ENCODE measurements at regions of chr16 and their contacts with region 1.

Region 1: DNA sequence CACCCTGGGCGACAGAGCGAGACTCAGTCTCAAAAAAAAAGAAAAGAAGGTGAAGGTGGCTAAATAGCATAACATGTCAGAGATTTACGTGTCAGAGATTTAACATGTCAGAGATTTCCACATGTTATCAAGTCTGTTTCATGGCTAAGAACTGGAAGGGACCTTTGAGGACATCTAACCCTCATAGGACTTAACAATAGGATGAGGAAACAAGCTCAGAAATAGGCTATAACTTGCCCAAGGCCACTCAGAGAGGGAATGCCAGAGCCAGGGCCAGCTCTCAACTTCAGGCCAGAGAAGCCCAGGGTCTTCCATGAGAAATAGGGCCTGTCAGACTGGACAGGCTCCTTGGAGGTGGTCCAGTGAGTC is 26.8 kb upstream of the ZNF629 start:
- DNase-seq: no peak
- H3K4me3 ChIP-seq: peak overlapping the region; percentile 17
- H3K27me3 ChIP-seq: no peaks in the 10 kb centered on the region
- CTCF ChIP-seq: no peak

Region 2: DNA sequence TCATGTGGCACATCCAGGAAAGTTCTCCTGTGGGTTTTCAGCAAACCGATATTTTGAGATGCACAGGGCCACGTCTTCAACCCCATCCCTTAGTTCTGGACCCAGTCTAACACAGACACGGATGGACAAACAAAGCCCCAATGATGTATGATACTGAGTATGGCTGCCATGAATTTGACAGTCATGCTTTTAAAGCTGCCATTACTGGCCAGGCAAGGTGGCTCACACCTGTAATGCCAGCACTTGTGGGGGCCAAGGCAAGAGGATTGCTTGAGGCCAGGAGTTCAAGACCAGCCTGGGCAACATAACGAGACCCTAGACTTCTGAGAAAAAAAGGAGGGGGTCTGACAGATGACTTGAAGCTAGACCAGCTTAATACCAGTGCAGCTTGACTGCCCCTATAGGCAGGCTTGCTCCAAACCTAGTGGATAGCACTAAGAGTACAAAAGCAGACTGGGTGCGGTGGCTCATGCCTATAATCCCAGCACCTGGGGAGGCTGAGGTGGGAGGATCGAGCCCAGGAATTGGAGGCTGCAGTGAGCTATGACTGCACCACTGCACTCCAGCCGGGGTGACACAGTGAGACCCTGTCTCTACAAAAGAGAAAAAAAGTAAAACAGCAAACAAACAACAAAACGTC is 16.0 kb before region 1 on chr16:
- CTCF ChIA-PET with region 1: interaction called, 11 read pairs
- POLR2A ChIA-PET with region 1: no interaction called
- DNase-seq: no peak
- H3K4me3 ChIP-seq: no peak overlapping the region
- H3K27me3 ChIP-seq: peaks cover 1% of the 10 kb centered on the region; the same call in 1 of the 2 replicates
- CTCF ChIP-seq: no peak

Region 3: DNA sequence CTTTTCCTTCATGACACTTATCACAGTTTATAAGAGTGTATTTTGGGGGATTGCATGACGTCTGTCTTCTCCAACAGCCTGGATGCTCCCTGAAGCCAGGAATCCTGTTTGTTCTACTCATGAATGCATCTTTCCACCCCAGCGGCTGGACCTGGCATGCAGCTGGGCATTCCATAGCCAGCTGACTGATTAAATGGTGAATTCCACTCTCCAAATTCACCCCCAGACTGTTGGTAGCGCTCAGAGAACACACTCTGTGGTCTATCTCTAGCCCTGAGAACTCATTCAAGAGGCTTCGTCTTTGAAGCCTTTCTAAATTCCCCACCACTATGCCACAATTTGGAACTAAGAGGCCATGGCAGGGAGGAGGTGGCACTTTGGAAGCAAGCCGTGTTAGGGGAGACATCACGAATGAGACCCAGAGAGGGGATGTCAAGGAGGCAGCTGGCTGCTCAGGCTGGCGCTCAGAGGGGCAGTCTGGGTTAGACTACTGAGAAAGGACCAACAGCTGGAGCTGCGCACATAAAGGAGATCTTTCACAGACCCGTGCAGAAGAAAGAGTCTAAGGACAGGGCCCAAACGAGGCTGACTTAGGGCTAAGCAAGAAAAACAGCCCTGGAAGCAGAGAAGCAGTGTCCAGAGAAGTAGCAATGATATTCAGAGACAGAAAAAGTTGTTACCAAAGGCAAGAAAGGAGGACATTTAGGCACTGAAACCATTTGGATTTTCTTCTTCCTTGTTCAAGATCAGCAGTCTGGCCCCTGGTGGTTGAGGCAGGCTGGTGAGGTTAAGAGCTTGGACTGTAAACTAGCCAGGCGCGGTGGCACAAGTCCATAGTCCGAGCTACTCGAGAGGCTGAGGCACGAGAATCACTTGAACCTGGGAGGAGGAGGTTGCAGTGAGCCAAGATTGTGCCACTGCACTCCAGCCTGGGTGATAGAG is 15.6 kb after region 1 on chr16:
- CTCF ChIA-PET with region 1: interaction called, 16 read pairs
- POLR2A ChIA-PET with region 1: no interaction called
- DNase-seq: no peak
- H3K4me3 ChIP-seq: no peak overlapping the region
- H3K27me3 ChIP-seq: no peaks in the 10 kb centered on the region
- CTCF ChIP-seq: no peak

Measured in BJ (cell line).